CD4-positive, alpha-beta T cell (primary cell): ENCODE measurements at regions of chr6 and their contacts with region 1.

Region 1: GRCh38 chr6:32868257-32868788 is 14.3 kb downstream of the PSMB9 start:
- DNase-seq: peak; percentile 76 to 94 (median 87)
- ATAC-seq: peak; percentile 81
- H3K4me3 ChIP-seq: no peak overlapping the region
- H3K4me3 Mint-ChIP-seq: no peak overlapping the region
- H3K27ac ChIP-seq: no peak overlapping the region
- H3K27ac Mint-ChIP-seq: peak overlapping the region; percentile 82
- H3K4me1 ChIP-seq: peaks cover 20% of the 10 kb centered on the region
- H3K4me1 Mint-ChIP-seq: peaks cover 35% of the 10 kb centered on the region
- H3K27me3 ChIP-seq: no peaks in the 10 kb centered on the region
- H3K27me3 Mint-ChIP-seq: no peaks in the 10 kb centered on the region
- CTCF ChIP-seq: peak; percentile 95

Region 2: DNA sequence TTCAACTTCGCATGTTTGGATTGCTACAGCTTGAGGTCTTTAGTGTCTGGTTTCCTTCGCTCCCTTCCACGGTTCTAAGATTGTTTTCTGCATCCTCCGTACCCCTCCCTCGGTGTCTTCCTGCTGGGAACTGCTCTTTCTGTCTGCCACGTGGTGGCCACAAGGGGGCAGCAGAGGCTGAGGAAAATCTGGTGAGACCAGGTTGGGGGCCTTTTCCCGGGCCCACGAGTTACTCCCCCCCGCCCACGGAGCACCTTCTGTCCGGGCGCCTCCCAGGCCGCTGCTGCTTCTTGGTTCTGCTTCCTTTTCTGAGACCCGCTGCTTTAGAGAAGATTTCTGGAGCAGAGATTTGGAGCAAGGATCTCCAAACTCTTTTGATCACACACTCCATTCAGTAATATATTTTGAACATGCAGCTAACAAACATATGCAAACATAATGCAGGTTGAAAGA is 623.4 kb before region 1 on chr6:
- CTCF ChIA-PET with region 1: no interaction called
- POLR2A ChIA-PET with region 1: no interaction called
- intact Hi-C with region 1: loop called in 1 of 2 experiments (anchors 5 kb)
- DNase-seq: peak; percentile 50 to 85 (median 66)
- ATAC-seq: peak; percentile 84
- H3K4me3 ChIP-seq: no peak overlapping the region
- H3K4me3 Mint-ChIP-seq: no peak overlapping the region
- H3K27ac ChIP-seq: no peak overlapping the region
- H3K27ac Mint-ChIP-seq: no peak overlapping the region
- H3K4me1 ChIP-seq: peaks cover 7% of the 10 kb centered on the region
- H3K4me1 Mint-ChIP-seq: peaks cover 6% of the 10 kb centered on the region
- H3K27me3 ChIP-seq: no peaks in the 10 kb centered on the region
- H3K27me3 Mint-ChIP-seq: no peaks in the 10 kb centered on the region
- CTCF ChIP-seq: peak; percentile 97

Region 3: DNA sequence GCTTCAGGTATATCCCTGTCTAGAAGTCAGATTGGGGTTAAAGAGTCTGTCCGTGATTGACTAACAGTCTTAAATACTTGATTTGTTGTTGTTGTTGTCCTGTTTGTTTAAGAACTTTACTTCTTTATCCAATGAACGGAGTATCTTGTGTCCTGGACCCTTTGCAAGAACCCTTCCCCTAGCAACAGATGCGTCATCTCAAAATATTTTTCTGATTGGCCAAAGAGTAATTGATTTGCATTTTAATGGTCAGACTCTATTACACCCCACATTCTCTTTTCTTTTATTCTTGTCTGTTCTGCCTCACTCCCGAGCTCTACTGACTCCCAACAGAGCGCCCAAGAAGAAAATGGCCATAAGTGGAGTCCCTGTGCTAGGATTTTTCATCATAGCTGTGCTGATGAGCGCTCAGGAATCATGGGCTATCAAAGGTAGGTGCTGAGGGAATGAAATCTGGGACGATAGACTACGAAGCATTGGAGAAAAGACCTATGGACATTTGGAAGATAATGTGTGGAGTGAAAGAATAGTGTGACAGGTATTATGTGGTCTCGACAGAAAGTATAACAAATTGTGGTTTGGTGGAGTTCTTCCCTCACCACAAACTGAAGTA is 428.6 kb before region 1 on chr6 and contains the start of gene HLA-DRA:
- CTCF ChIA-PET with region 1: interaction called, 6 read pairs
- POLR2A ChIA-PET with region 1: no interaction called
- intact Hi-C with region 1: loop called in 1 of 2 experiments (anchors 5 kb)
- DNase-seq: peak in 5 of 14 experiments; percentile 8 to 87 (median 84)
- ATAC-seq: peak; percentile 85
- H3K4me3 ChIP-seq: peak within 1 kb of the TSS; percentile 51
- H3K4me3 Mint-ChIP-seq: peak within 1 kb of the TSS; percentile 62
- H3K27ac ChIP-seq: peak within 1 kb of the TSS in 1 of 2 donors; percentile 32
- H3K27ac Mint-ChIP-seq: no peak within 1 kb of the TSS
- H3K4me1 ChIP-seq: peaks cover 7% of the 10 kb centered on the region
- H3K4me1 Mint-ChIP-seq: peaks cover 9% of the 10 kb centered on the region
- H3K27me3 ChIP-seq: no peaks in the 10 kb centered on the region
- H3K27me3 Mint-ChIP-seq: peaks cover 42% of the 10 kb centered on the region
- CTCF ChIP-seq: no peak
- total RNA-seq, gene HLA-DRA: 50.3 to 51.0 TPM

Region 4: GRCh38 chr6:32700391-32701040 is 167.8 kb before region 1 on chr6:
- CTCF ChIA-PET with region 1: interaction called, 3 read pairs
- POLR2A ChIA-PET with region 1: no interaction called
- intact Hi-C with region 1: loop called in 1 of 2 experiments (anchors 5 kb)
- DNase-seq: peak in 10 of 14 experiments; percentile 0 to 73 (median 10)
- ATAC-seq: peak; percentile 41
- H3K4me3 ChIP-seq: no peak overlapping the region
- H3K4me3 Mint-ChIP-seq: no peak overlapping the region
- H3K27ac ChIP-seq: no peak overlapping the region
- H3K27ac Mint-ChIP-seq: no peak overlapping the region
- H3K4me1 ChIP-seq: peaks cover 3% of the 10 kb centered on the region
- H3K4me1 Mint-ChIP-seq: no peaks in the 10 kb centered on the region
- H3K27me3 ChIP-seq: peaks cover 4 to 12% of the 10 kb centered on the region in 2 experiments
- H3K27me3 Mint-ChIP-seq: peaks cover 50% of the 10 kb centered on the region
- CTCF ChIP-seq: peak; percentile 93

Region 5: DNA sequence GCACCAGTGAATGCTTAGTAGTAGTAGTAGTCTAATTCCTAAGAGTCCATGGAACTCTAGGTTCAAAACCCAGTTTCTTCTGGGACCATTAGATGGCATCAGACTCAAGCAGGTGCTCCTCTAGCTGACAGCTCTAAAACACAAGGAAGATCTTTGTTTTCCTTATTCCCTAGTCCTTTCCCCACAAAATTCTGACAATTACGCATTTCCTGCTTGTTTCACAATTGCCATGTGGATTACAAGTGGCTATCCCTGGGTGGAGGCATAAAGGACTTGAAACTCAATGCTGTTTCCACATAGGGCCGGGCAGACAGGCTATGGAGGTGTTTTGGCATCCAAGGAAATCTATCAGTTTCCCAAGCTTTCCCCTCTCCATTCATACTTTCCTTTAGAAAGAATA is 42.4 kb before region 1 on chr6:
- CTCF ChIA-PET with region 1: interaction called, 18 read pairs
- POLR2A ChIA-PET with region 1: interaction called, 14 read pairs
- intact Hi-C with region 1: loop called in 1 of 2 experiments (anchors 5 kb)
- DNase-seq: peak in 1 of 14 experiments; percentile 43
- ATAC-seq: no peak
- H3K4me3 ChIP-seq: no peak overlapping the region
- H3K4me3 Mint-ChIP-seq: no peak overlapping the region
- H3K27ac ChIP-seq: no peak overlapping the region
- H3K27ac Mint-ChIP-seq: no peak overlapping the region
- H3K4me1 ChIP-seq: no peaks in the 10 kb centered on the region
- H3K4me1 Mint-ChIP-seq: no peaks in the 10 kb centered on the region
- H3K27me3 ChIP-seq: no peaks in the 10 kb centered on the region
- H3K27me3 Mint-ChIP-seq: no peaks in the 10 kb centered on the region
- CTCF ChIP-seq: peak; percentile 26

Region 6: DNA sequence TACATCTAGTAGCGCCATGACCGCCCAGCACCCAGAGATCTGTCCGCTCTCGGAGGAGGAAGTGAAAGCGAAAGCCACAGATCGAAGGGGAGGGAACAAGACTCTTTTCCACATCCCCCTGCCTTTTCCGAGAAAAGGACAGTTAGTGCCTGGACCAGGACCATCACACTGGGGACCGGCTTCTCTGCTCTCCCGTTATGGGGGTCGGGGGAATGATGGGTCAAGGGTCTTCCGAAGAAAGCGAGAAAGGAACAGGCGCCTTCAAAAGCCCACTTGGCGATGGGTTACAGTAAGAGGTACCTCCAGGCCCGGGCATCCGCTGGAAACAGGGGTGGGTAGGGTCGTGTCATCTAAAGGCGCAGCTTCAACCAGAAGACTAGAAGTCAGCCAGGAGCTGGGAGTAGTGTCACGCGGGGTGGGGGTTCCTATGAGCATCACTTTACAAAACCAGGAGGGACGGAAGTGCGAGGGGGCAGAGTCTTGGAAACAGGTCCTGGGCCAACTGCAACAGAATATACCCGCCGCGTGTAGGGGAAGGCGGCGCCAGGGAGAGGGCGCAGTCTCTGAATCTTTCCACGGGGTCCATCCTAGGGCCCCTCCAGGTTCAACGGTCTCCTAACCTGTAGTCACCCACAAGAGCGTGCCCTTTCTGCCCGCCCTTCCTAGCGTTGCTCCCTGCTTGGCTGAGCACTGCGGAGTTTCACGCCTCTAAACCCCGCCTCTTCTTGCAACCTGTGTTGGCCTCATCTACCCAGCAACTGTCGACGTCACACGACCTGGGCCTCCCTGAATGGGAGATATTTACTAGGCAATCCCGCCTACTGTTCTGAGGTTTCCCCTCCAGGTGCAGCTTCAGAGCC is 24.1 kb before region 1 on chr6 and contains the start of gene PSMB8:
- CTCF ChIA-PET with region 1: interaction called, 186 read pairs
- POLR2A ChIA-PET with region 1: interaction called, 282 read pairs
- intact Hi-C with region 1: no loop called
- DNase-seq: peak; percentile 94 to 99 (median 98)
- ATAC-seq: peak; percentile 79
- H3K4me3 ChIP-seq: peak within 1 kb of the TSS; percentile 94
- H3K4me3 Mint-ChIP-seq: peak within 1 kb of the TSS; percentile 97
- H3K27ac ChIP-seq: peak within 1 kb of the TSS; percentile 99 to 100
- H3K27ac Mint-ChIP-seq: peak within 1 kb of the TSS; percentile 99
- H3K4me1 ChIP-seq: peaks cover 73% of the 10 kb centered on the region
- H3K4me1 Mint-ChIP-seq: peaks cover 96% of the 10 kb centered on the region
- H3K27me3 ChIP-seq: no peaks in the 10 kb centered on the region
- H3K27me3 Mint-ChIP-seq: no peaks in the 10 kb centered on the region
- CTCF ChIP-seq: no peak
- total RNA-seq, gene PSMB8: 120 to 121 TPM

Region 7: GRCh38 chr6:33467091-33467490 is 598.8 kb after region 1 on chr6:
- CTCF ChIA-PET with region 1: no interaction called
- POLR2A ChIA-PET with region 1: no interaction called
- intact Hi-C with region 1: no loop called
- DNase-seq: no peak
- ATAC-seq: no peak
- H3K4me3 ChIP-seq: no peak overlapping the region
- H3K4me3 Mint-ChIP-seq: no peak overlapping the region
- H3K27ac ChIP-seq: no peak overlapping the region
- H3K27ac Mint-ChIP-seq: no peak overlapping the region
- H3K4me1 ChIP-seq: no peaks in the 10 kb centered on the region
- H3K4me1 Mint-ChIP-seq: no peaks in the 10 kb centered on the region
- H3K27me3 ChIP-seq: no peaks in the 10 kb centered on the region
- H3K27me3 Mint-ChIP-seq: no peaks in the 10 kb centered on the region
- CTCF ChIP-seq: no peak